ENCODE measurements at regions of chr4 and their contacts with region 1.

Region 1: GRCh38 chr4:78517050-78517652 is 34.4 kb upstream of the ANXA3 start:
- DNase-seq: no peak
- H3K4me3 ChIP-seq: no peak overlapping the region
- H3K27ac ChIP-seq: no peak overlapping the region
- H3K27me3 ChIP-seq: peaks cover 6% of the 10 kb centered on the region
- CTCF ChIP-seq: peak; percentile 69

Region 2: GRCh38 chr4:77959566-77960338 is 557.4 kb before region 1 on chr4:
- CTCF ChIA-PET with region 1: interaction called, 11 read pairs
- POLR2A ChIA-PET with region 1: no interaction called
- DNase-seq: peak; percentile 18
- H3K4me3 ChIP-seq: no peak overlapping the region
- H3K27ac ChIP-seq: no peak overlapping the region
- H3K27me3 ChIP-seq: no peaks in the 10 kb centered on the region
- CTCF ChIP-seq: peak; percentile 68

Region 3: GRCh38 chr4:78529569-78530209 is 12.5 kb after region 1 on chr4:
- CTCF ChIA-PET with region 1: interaction called, 26 read pairs
- POLR2A ChIA-PET with region 1: no interaction called
- DNase-seq: no peak
- H3K4me3 ChIP-seq: no peak overlapping the region
- H3K27ac ChIP-seq: peak overlapping the region; percentile 65
- H3K27me3 ChIP-seq: no peaks in the 10 kb centered on the region
- CTCF ChIP-seq: no peak